CD4-positive, alpha-beta memory T cell (primary cell): ENCODE measurements at regions of chr22 and their contacts with region 1.

Region 1: GRCh38 chr22:23696326-23696851 is 5.6 kb downstream of the RGL4 start:
- DNase-seq: peak; percentile 82 to 90 (median 86)
- H3K4me3 ChIP-seq: peak overlapping the region; percentile 58 to 93
- H3K4me3 Mint-ChIP-seq: peak overlapping the region; percentile 92 to 99 (median 97)
- H3K27ac ChIP-seq: peak overlapping the region; percentile 82
- H3K27ac Mint-ChIP-seq: peak overlapping the region; percentile 98 to 100 (median 100)
- H3K4me1 ChIP-seq: peaks cover 43% of the 10 kb centered on the region
- H3K4me1 Mint-ChIP-seq: peaks cover 27 to 61% (median 44%) of the 10 kb centered on the region in 4 donors
- H3K27me3 ChIP-seq: no peaks in the 10 kb centered on the region
- H3K27me3 Mint-ChIP-seq: no peaks in the 10 kb centered on the region

Region 2: GRCh38 chr22:23128269-23129108 is 567.9 kb before region 1 on chr22:
- CTCF ChIA-PET with region 1: no interaction called
- POLR2A ChIA-PET with region 1: no interaction called
- intact Hi-C with region 1: no loop called
- DNase-seq: peak; percentile 64 to 70 (median 66)
- H3K4me3 ChIP-seq: no peak overlapping the region
- H3K4me3 Mint-ChIP-seq: no peak overlapping the region
- H3K27ac ChIP-seq: no peak overlapping the region
- H3K27ac Mint-ChIP-seq: peak overlapping the region in 4 of 7 donors; percentile 36 to 92 (median 84)
- H3K4me1 ChIP-seq: no peaks in the 10 kb centered on the region
- H3K4me1 Mint-ChIP-seq: peaks cover 0 to 7% (median 5%) of the 10 kb centered on the region in 4 donors
- H3K27me3 ChIP-seq: no peaks in the 10 kb centered on the region
- H3K27me3 Mint-ChIP-seq: no peaks in the 10 kb centered on the region

Region 3: GRCh38 chr22:23598805-23599493 is 97.4 kb before region 1 on chr22:
- CTCF ChIA-PET with region 1: no interaction called
- POLR2A ChIA-PET with region 1: no interaction called
- intact Hi-C with region 1: no loop called
- DNase-seq: no peak
- H3K4me3 ChIP-seq: no peak overlapping the region
- H3K4me3 Mint-ChIP-seq: no peak overlapping the region
- H3K27ac ChIP-seq: no peak overlapping the region
- H3K27ac Mint-ChIP-seq: no peak overlapping the region
- H3K4me1 ChIP-seq: no peaks in the 10 kb centered on the region
- H3K4me1 Mint-ChIP-seq: no peaks in the 10 kb centered on the region
- H3K27me3 ChIP-seq: no peaks in the 10 kb centered on the region
- H3K27me3 Mint-ChIP-seq: peaks cover 0 to 2% of the 10 kb centered on the region in 2 donors

Region 4: DNA sequence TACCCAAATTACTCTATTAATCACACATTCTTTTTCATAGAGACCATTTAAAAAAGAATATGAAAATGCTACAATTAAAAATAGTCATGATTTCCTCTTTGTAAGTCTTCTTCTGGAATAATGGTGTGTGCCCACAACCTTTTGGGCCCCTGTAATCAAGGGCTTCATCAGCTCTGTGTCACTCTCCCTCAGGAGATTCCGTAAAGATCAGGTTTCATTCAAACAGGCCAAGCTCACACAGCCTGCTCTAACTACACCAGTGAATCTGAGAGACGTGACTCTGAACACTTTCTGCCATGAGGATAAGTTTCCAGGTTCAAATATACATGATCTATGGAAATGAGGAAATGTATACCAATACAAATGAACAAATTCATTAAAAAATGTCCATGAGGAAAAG is 73.8 kb before region 1 on chr22:
- CTCF ChIA-PET with region 1: no interaction called
- POLR2A ChIA-PET with region 1: no interaction called
- intact Hi-C with region 1: no loop called
- DNase-seq: no peak
- H3K4me3 ChIP-seq: no peak overlapping the region
- H3K4me3 Mint-ChIP-seq: no peak overlapping the region
- H3K27ac ChIP-seq: no peak overlapping the region
- H3K27ac Mint-ChIP-seq: no peak overlapping the region
- H3K4me1 ChIP-seq: no peaks in the 10 kb centered on the region
- H3K4me1 Mint-ChIP-seq: peaks cover 0 to 3% (median 0%) of the 10 kb centered on the region in 4 donors
- H3K27me3 ChIP-seq: no peaks in the 10 kb centered on the region
- H3K27me3 Mint-ChIP-seq: no peaks in the 10 kb centered on the region

Region 5: DNA sequence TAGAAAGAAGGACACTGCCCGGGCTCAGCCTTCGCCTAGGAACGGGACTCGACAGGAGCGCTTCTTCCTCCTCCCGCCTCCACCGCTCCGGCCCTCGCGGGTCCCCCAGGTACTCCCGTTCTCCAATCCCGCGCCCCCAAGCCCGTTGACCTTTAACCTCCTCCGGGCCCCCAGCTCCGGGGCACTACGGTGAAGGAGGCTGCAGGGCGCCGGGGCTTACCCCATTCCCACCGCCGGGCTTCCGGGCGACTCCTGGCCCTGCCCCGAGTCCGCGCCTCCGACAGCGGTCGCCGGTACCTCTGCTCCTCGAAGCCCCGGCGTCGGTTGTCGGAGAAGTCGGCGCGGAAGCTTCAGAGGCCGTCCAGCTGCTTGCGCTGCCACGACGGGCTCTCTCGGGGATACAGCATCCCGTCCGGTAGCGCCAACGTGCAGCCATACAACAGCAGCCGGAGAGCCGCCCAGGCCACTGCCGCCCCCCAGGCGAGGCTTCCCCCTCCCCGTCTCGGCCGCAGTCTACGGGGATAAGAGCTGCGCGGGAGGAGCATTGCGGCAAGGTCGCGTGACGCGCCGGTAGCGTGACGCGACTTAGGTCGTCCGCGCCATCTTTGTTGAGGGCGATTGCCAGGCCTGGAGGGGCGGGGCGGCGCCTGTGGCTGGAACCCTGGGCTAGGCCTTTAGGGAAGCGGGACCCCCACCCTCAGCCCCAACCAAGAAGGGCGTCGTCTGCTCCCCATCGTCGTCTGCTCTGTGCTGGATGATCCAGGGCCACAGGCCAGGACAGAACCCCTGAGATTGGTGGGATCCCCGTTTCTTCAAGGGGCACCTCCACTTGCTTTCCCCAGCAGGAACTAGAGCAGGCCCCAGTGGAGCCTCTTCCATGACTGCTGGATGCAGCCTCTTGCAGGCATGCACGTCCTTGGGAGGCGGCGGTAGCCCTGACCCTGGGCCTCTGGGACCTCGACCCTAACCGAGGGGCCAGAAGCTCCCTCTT is 20.7 kb after region 1 on chr22:
- CTCF ChIA-PET with region 1: interaction called, 8 read pairs
- POLR2A ChIA-PET with region 1: interaction called, 76 read pairs
- intact Hi-C with region 1: loop called (anchors 2 kb)
- DNase-seq: peak; percentile 77 to 83 (median 81)
- H3K4me3 ChIP-seq: peak overlapping the region; percentile 62 to 69
- H3K4me3 Mint-ChIP-seq: peak overlapping the region; percentile 73 to 87 (median 84)
- H3K27ac ChIP-seq: peak overlapping the region; percentile 77
- H3K27ac Mint-ChIP-seq: peak overlapping the region; percentile 60 to 93 (median 87)
- H3K4me1 ChIP-seq: peaks cover 21% of the 10 kb centered on the region
- H3K4me1 Mint-ChIP-seq: peaks cover 7 to 28% (median 13%) of the 10 kb centered on the region in 4 donors
- H3K27me3 ChIP-seq: no peaks in the 10 kb centered on the region
- H3K27me3 Mint-ChIP-seq: no peaks in the 10 kb centered on the region

Region 6: GRCh38 chr22:23750714-23751440 is 54.5 kb after region 1 on chr22 and contains the start of gene ZNF70:
- CTCF ChIA-PET with region 1: no interaction called
- POLR2A ChIA-PET with region 1: interaction called, 18 read pairs
- intact Hi-C with region 1: loop called (anchors 1 kb)
- DNase-seq: peak; percentile 83 to 88 (median 86)
- H3K4me3 ChIP-seq: peak within 1 kb of the TSS; percentile 73 to 82
- H3K4me3 Mint-ChIP-seq: peak within 1 kb of the TSS; percentile 76 to 85 (median 80)
- H3K27ac ChIP-seq: peak within 1 kb of the TSS; percentile 67
- H3K27ac Mint-ChIP-seq: peak within 1 kb of the TSS; percentile 69 to 87 (median 78)
- H3K4me1 ChIP-seq: peaks cover 13% of the 10 kb centered on the region
- H3K4me1 Mint-ChIP-seq: peaks cover 7 to 21% (median 12%) of the 10 kb centered on the region in 4 donors
- H3K27me3 ChIP-seq: no peaks in the 10 kb centered on the region
- H3K27me3 Mint-ChIP-seq: no peaks in the 10 kb centered on the region
- total RNA-seq, gene ZNF70: 6.4 to 7.4 TPM

Region 7: DNA sequence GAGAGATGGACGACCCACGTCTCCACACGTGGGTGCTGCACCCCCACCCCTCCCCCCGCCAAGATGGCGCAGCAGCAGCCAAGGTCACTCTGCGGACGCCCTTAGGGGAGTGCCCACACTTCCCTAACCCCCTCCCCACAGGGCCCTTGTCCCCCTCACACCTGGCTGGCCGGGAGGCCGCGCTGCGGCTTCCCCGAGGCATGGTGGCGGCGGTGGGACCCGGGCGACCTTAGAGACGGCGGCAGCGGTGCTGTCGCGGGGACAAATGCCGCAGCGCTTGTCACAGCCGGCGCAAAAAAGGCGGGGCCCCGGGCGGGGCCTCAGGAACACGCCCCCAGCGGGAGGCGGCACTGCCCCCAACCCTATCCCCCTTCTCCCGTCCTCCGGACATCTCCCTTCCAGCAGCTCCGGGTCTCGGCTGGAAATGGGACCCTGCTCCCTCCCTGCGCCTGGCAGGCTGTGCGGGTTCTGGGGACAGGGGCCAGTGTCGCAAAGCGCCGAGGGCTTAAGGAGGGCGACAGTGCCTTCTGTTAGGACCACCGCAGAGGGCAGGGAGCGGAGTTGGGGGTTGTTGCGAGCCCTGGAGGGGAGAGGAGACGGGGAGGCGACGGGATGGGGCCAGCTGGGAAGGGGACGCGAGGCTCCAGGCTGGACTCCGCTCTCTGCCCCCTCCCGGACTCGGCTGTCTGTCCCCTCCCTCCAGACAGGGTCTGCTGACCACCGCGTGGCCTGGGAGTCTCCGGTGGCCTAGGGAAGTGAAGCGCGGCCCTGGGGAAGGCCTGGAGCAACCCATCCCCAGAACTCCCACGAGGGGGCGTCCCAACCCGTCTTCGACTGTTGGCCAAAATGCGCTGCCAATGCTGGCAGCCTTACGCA is 71.5 kb after region 1 on chr22 and contains the start of gene CHCHD10:
- CTCF ChIA-PET with region 1: no interaction called
- POLR2A ChIA-PET with region 1: interaction called, 5 read pairs
- intact Hi-C with region 1: loop called (anchors 5 kb)
- DNase-seq: peak; percentile 70 to 76 (median 73)
- H3K4me3 ChIP-seq: peak within 1 kb of the TSS; percentile 65 to 82
- H3K4me3 Mint-ChIP-seq: peak within 1 kb of the TSS; percentile 77 to 90 (median 84)
- H3K27ac ChIP-seq: peak within 1 kb of the TSS; percentile 63
- H3K27ac Mint-ChIP-seq: peak within 1 kb of the TSS in 6 of 7 donors; percentile 9 to 88 (median 49)
- H3K4me1 ChIP-seq: peaks cover 44% of the 10 kb centered on the region
- H3K4me1 Mint-ChIP-seq: peaks cover 7 to 45% (median 28%) of the 10 kb centered on the region in 4 donors
- H3K27me3 ChIP-seq: no peaks in the 10 kb centered on the region
- H3K27me3 Mint-ChIP-seq: no peaks in the 10 kb centered on the region
- total RNA-seq, gene CHCHD10: 44.7 to 45.9 TPM

Region 8: DNA sequence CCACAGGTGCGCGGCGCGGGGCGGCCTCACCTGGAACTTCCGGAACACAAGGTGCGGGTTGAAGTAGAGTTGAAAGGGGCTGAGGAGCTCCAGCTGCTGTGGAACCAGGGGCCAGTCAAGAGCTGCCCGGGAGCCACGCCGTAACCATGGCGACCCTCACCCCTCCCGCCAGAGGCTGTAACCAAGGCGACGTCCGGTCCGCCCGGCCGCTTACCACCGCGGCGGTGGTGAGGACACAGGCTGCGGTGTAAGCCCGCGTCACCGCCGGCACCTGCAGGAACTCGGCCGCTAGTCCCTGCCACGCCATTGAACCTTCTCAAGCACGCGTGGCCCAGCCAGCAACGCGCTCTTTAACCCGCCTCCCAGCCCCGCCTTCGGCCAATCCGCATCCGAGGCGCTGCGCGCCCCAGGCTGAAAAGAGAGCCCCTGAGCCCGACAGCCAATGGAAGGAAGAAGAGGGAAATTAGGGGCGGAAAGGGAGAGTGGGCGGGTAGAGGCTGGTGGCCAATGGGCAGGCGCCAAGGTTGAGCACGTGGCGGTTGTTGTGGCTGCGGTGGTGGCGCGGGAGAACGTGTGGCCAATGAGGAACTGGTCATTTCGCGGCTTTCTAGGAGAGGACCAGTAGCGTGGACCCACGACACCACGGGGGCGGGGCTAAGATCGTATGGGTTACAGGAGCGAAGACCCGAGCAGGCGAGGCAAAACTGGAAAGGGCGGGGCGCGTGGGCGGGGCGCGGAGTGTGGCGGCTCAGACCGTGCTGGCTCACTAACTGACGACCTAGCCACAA is 142.5 kb after region 1 on chr22 and contains the start of gene DERL3:
- CTCF ChIA-PET with region 1: no interaction called
- POLR2A ChIA-PET with region 1: no interaction called
- intact Hi-C with region 1: loop called (anchors 10 kb)
- DNase-seq: peak; percentile 93 to 96 (median 95)
- H3K4me3 ChIP-seq: peak within 1 kb of the TSS in 1 of 2 donors; percentile 83
- H3K4me3 Mint-ChIP-seq: peak within 1 kb of the TSS; percentile 85 to 96 (median 91)
- H3K27ac ChIP-seq: peak within 1 kb of the TSS; percentile 24
- H3K27ac Mint-ChIP-seq: peak within 1 kb of the TSS; percentile 83 to 97 (median 93)
- H3K4me1 ChIP-seq: peaks cover 14% of the 10 kb centered on the region
- H3K4me1 Mint-ChIP-seq: peaks cover 14 to 30% (median 20%) of the 10 kb centered on the region in 4 donors
- H3K27me3 ChIP-seq: no peaks in the 10 kb centered on the region
- H3K27me3 Mint-ChIP-seq: no peaks in the 10 kb centered on the region
- total RNA-seq, gene DERL3: 1.9 to 2.9 TPM

Region 9: DNA sequence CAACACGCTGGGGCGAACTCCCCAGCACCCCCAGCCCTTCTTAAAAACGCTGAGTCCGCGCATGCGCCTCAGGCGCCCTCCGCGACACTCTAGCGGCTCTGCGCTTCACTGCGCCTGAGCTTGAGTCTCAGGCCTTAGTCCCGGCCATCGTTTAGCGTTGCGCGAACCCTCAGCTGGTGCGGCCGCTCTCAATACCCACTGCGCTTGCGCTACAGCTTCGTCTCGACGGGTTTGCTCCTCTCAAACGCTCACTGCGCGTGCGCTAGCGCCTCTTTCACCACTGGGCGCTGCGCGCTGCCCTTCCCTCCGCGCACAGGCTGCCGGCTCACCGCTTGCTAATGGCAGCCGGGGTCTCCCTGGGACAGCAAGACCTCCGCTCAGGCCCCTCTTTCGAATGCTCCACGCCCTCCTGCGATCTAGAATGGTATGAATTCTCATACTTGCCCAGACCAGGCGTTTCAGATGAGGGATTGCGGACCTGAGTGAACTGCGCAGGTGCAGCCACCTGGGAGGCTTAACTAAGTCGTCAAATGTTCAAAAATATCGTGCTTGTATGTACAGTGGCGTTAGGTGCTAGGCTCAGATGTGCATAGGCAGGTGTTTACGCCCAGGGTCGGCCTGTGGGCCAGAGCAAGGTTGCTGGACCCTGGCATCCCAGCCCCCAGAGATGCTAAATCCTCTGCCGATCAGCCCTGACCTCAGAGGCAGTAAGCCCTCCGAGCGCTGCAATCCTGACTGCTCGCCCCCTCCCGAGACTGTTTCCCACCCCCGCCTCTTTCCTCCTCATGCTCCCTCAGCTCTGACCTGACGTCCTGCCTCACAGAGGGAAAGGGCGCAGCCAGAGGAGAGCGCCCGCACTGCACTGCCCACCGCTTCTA is 161.5 kb after region 1 on chr22 and contains the start of gene SLC2A11:
- CTCF ChIA-PET with region 1: no interaction called
- POLR2A ChIA-PET with region 1: interaction called, 11 read pairs
- intact Hi-C with region 1: no loop called
- DNase-seq: peak; percentile 90 to 95 (median 92)
- H3K4me3 ChIP-seq: peak within 1 kb of the TSS; percentile 86 to 98
- H3K4me3 Mint-ChIP-seq: peak within 1 kb of the TSS; percentile 92 to 98 (median 95)
- H3K27ac ChIP-seq: peak within 1 kb of the TSS; percentile 76
- H3K27ac Mint-ChIP-seq: peak within 1 kb of the TSS; percentile 84 to 94 (median 89)
- H3K4me1 ChIP-seq: peaks cover 19% of the 10 kb centered on the region
- H3K4me1 Mint-ChIP-seq: peaks cover 14 to 24% (median 19%) of the 10 kb centered on the region in 4 donors
- H3K27me3 ChIP-seq: no peaks in the 10 kb centered on the region
- H3K27me3 Mint-ChIP-seq: no peaks in the 10 kb centered on the region
- total RNA-seq, gene SLC2A11: 24.5 to 27.2 TPM